Prostate gland (tissue), 2 donors: ENCODE measurements at regions of chrX and their contacts with region 1.

Region 1: GRCh38 chrX:106903291-106903824 is at the start of gene RIPPLY1:
- DNase-seq: no peak
- H3K4me3 ChIP-seq: no peak within 1 kb of the TSS
- H3K27ac ChIP-seq: no peak within 1 kb of the TSS
- H3K4me1 ChIP-seq: no peaks in the 10 kb centered on the region
- H3K27me3 ChIP-seq: no peaks in the 10 kb centered on the region
- CTCF ChIP-seq: no peak
- POLR2A ChIP-seq: no peak
- total RNA-seq, gene RIPPLY1: not detected

Region 2: GRCh38 chrX:106649523-106650428 is 253.6 kb before region 1 on chrX:
- intact Hi-C with region 1: no loop called
- DNase-seq: no peak
- H3K4me3 ChIP-seq: no peak overlapping the region
- H3K27ac ChIP-seq: no peak overlapping the region
- H3K4me1 ChIP-seq: no peaks in the 10 kb centered on the region
- H3K27me3 ChIP-seq: no peaks in the 10 kb centered on the region
- CTCF ChIP-seq: no peak
- POLR2A ChIP-seq: no peak

Region 3: GRCh38 chrX:106952988-106953387 is 49.6 kb after region 1 on chrX:
- intact Hi-C with region 1: loop called (anchors 5 kb)
- DNase-seq: no peak
- H3K4me3 ChIP-seq: no peak overlapping the region
- H3K27ac ChIP-seq: no peak overlapping the region
- H3K4me1 ChIP-seq: no peaks in the 10 kb centered on the region
- H3K27me3 ChIP-seq: no peaks in the 10 kb centered on the region
- CTCF ChIP-seq: peak in 1 of 4 experiments; percentile 9
- POLR2A ChIP-seq: no peak